ENCODE measurements at regions of chr2 and their contacts with region 1.

Region 1: GRCh38 chr2:120802158-120802557 is 66.5 kb downstream of the GLI2 start:
- DNase-seq: no peak
- ATAC-seq: peak in 2 of 8 donors; percentile 32
- H3K4me3 ChIP-seq: no peak overlapping the region
- H3K27ac ChIP-seq: peak overlapping the region in 2 of 10 donors; percentile 19 to 41
- H3K4me1 ChIP-seq: peaks cover 0 to 20% (median 0%) of the 10 kb centered on the region in 9 donors
- H3K27me3 ChIP-seq: peaks cover 0 to 9% (median 0%) of the 10 kb centered on the region in 7 donors
- CTCF ChIP-seq: no peak

Region 2: GRCh38 chr2:119104414-119104813 is 1697.7 kb before region 1 on chr2:
- intact Hi-C with region 1: loop called in 1 of 10 experiments (anchors 5 kb)
- DNase-seq: no peak
- ATAC-seq: no peak
- H3K4me3 ChIP-seq: no peak overlapping the region
- H3K27ac ChIP-seq: no peak overlapping the region
- H3K4me1 ChIP-seq: no peaks in the 10 kb centered on the region
- H3K27me3 ChIP-seq: peaks cover 0 to 9% (median 0%) of the 10 kb centered on the region in 7 donors
- CTCF ChIP-seq: no peak

Region 3: DNA sequence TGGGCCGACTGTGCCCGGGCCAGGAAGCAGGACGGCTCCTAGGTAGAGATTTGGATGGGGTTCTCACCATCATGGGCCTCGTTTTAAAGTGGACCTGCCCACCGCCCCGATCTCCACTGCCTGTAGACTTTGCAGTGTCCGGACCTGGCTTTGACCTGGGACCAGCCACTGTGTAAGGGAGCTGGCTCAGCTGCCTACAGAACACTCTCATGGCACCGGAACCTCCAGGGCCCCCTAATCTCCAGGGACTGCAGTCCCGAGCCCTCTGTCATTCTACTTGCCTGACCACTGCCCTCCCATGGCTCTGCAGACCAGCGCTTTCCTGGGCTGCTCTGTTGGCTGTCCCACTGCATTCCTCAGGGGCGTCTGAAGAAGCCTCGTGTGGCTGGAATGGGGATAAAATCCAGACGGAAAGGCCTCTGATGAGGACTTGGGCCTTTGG is 54.3 kb after region 1 on chr2:
- intact Hi-C with region 1: no loop called
- DNase-seq: no peak
- ATAC-seq: peak in 2 of 8 donors; percentile 20 to 35
- H3K4me3 ChIP-seq: no peak overlapping the region
- H3K27ac ChIP-seq: no peak overlapping the region
- H3K4me1 ChIP-seq: peaks cover 0 to 6% (median 0%) of the 10 kb centered on the region in 9 donors
- H3K27me3 ChIP-seq: no peaks in the 10 kb centered on the region
- CTCF ChIP-seq: no peak

Region 4: GRCh38 chr2:120971866-120972685 is 169.9 kb after region 1 on chr2:
- intact Hi-C with region 1: no loop called
- DNase-seq: no peak
- ATAC-seq: no peak
- H3K4me3 ChIP-seq: no peak overlapping the region
- H3K27ac ChIP-seq: no peak overlapping the region
- H3K4me1 ChIP-seq: no peaks in the 10 kb centered on the region
- H3K27me3 ChIP-seq: peaks cover 0 to 4% (median 0%) of the 10 kb centered on the region in 7 donors
- CTCF ChIP-seq: no peak